Right ventricle myocardium inferior (tissue), 1 donor: ENCODE measurements at regions of chr11 and their contacts with region 1.

Region 1: GRCh38 chr11:14249121-14249963 is 109.6 kb downstream of the RRAS2 start:
- DNase-seq: peak; percentile 84
- ATAC-seq: peak; percentile 54

Region 2: DNA sequence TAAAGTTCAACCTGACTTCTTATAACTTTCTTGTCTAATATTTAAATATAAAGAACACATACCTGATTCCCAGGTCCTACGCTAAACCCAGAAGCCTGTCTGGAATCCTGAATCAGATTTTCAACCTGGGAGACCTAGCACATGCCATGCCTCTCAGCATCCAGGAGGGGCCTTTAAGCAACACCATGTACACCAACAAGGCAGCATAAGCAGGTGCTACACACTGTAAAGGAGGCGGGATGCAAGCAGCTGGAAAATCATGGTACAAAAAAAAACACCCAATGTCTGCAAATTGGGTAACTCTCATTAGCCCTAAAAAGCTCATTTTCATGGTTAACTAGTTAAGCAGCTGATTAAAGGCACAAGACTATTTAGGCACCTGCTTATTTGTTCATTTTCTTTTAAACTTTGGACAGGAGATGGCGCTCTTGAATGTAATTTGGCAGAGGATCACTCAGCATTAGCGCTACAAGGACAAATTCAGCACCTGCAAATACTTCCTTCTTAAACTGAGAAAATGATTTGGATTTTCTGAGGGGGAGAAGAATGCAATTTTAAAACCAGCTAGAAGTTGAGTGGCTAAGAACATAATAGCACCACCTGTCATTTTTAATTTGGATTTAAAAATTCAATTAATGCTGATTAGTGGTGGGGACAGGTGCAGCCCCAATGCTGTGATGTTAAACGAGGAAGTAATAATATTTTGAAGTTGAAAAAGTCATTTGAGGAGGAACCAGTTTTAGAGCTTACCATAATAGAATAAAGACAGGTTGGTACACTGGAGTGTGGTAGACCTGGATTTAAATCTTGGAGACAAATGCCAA is 476.9 kb before region 1 on chr11:
- intact Hi-C with region 1: loop called (anchors 2 kb)
- DNase-seq: no peak
- ATAC-seq: no peak

Region 3: GRCh38 chr11:13955971-13956421 is 293.3 kb before region 1 on chr11:
- intact Hi-C with region 1: loop called (anchors 2 kb)
- DNase-seq: no peak
- ATAC-seq: peak; percentile 50

Region 4: GRCh38 chr11:14148653-14149273 is 100.6 kb before region 1 on chr11:
- intact Hi-C with region 1: loop called (anchors 5 kb)
- DNase-seq: no peak
- ATAC-seq: peak; percentile 52